Transverse colon (tissue), 4 donors: ENCODE measurements at regions of chr2 and their contacts with region 1.

Region 1: DNA sequence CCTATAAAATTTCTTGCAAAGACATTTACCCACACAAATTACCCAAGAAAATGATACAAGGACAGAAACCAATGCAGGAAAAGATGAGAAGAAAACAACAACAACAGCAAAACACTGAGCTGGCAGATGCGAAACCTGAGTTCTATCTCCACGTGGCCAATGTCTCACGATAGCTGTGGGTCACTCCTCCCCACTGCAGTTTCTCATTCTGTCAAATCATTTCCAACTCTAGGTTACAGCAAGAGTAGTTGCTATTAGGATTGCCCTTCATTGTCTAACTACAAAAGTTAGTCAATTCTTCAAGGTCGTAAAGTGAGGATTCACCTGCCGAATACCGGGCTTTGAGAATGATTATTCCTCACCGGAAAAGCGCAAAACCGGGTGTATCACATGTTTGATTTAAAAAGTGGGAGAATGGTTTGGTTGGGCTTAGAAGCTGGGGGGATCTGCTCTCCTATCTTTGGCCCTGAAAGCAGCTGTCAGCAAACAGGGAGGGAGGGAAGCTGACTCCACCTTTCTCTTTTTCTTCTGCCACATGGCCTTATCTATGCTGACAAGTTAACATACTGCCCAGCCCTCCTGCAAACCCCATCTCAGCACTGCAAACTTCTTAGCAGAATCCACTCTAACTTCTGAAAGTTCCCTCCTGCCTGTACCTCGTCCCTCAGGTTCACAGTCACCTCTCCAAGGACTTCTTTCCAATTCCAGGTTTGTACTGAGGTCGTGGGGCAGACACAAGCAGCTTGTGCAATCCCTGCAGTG is 473.0 kb downstream of the SOX11 start:
- DNase-seq: no peak
- H3K4me3 ChIP-seq: no peak overlapping the region
- H3K27ac ChIP-seq: no peak overlapping the region
- H3K4me1 ChIP-seq: no peaks in the 10 kb centered on the region
- H3K27me3 ChIP-seq: no peaks in the 10 kb centered on the region
- CTCF ChIP-seq: no peak
- EP300 ChIP-seq: no peak
- POLR2A ChIP-seq: no peak

Region 2: GRCh38 chr2:6127718-6128117 is 37.4 kb before region 1 on chr2:
- in situ Hi-C with region 1: no loop called
- intact Hi-C with region 1: loop called (anchors 2 kb)
- DNase-seq: no peak
- H3K4me3 ChIP-seq: no peak overlapping the region
- H3K27ac ChIP-seq: no peak overlapping the region
- H3K4me1 ChIP-seq: no peaks in the 10 kb centered on the region
- H3K27me3 ChIP-seq: no peaks in the 10 kb centered on the region
- CTCF ChIP-seq: no peak
- EP300 ChIP-seq: no peak
- POLR2A ChIP-seq: no peak